ENCODE measurements at regions of chr11 and their contacts with region 1.

Region 1: GRCh38 chr11:120682866-120683265 is 171.3 kb downstream of the GRIK4 start:
- DNase-seq: no peak
- H3K4me3 ChIP-seq: no peak overlapping the region
- CTCF ChIP-seq: no peak

Region 2: DNA sequence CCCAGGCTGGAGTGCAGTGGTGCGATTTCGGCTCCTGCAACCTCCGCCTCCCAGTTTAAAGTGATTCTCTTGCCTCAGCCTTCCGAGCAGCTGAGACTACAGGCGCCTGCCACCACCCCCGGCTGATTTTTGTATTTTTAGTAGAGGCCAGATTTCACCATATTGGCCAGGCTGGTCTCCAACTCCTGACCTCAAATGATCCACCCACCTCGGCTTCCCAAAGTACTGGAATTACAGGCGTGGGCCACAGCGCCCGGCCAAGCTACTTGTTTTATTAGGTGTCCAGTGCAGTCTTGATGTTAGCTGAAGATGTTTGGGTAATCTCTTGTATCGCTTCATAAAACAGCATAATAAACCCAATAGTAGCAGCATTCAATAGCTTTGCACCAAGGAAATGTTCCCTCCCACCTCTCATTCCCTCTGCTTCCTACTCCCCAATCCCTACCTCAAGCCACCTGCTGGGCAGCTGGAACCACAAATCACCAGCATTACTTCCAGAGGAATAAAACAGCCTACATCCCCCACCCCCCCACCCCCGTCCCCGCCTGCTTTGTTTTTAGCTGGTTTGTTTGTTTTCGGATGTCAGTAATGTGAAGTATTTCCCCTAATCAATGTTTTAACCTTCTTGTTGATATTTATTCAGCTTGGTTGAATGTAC is 182.3 kb before region 1 on chr11:
- CTCF ChIA-PET with region 1: interaction called, 249 read pairs
- POLR2A ChIA-PET with region 1: no interaction called
- DNase-seq: no peak
- H3K4me3 ChIP-seq: no peak overlapping the region
- CTCF ChIP-seq: no peak

Region 3: GRCh38 chr11:120696597-120697218 is 13.8 kb after region 1 on chr11:
- CTCF ChIA-PET with region 1: interaction called, 29 read pairs
- POLR2A ChIA-PET with region 1: no interaction called
- DNase-seq: no peak
- H3K4me3 ChIP-seq: no peak overlapping the region
- CTCF ChIP-seq: no peak

Region 4: DNA sequence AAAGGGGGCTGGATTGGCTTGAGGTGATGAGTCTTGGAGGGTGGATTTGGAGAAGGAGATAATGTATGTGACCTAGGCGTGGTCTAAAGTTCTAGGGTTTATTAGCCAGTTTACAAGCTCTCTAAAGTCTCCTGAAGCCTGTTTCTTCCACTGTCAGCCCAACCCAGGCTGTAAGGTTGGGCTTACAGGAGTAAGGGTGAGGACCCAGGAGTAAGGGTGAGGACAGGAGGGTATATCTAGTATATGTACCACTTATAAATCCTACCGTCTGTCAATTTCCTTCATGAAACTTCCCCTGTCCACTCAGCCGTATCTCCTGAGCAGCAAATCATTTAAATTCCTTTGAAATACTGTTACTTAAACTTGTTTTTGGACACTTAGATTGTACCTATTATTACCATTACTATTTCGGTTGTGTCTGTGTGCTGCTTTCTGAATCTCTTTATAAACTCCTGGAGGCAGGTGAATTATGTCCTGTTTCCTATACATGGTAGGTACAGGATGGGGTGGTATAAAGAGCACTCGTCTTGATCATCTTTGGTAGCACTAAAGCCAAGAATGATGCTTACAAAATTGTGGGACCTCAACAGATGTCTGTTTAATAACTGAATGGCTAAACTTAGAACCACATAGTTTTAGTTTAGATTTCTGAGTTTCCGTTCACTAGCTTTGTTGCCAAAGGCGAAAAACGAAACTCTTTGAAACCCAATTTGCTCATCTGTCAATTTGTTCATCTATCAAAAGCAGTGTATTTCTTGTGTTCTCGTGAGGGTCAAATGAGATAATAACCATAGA is 20.7 kb after region 1 on chr11:
- CTCF ChIA-PET with region 1: interaction called, 29 read pairs
- POLR2A ChIA-PET with region 1: no interaction called
- DNase-seq: no peak
- H3K4me3 ChIP-seq: no peak overlapping the region
- CTCF ChIP-seq: no peak

Region 5: DNA sequence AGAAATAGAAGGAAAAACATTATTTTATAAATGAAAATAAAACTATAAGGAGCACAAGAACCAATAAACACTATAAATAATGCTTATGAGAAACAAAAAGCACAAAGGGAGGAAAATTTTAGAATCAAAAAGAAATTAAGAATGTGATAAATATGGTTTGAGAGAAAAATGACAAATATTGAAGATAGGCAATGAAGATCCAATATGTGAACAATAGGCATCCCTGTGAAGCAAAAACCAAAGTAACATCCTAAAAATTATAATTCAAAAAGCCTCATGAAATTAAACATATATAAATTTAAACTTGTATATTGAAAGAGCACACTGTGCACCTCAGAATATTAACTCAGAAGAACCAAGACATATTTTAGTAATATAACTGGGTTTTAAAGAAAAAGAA is 44.9 kb after region 1 on chr11:
- CTCF ChIA-PET with region 1: no interaction called
- POLR2A ChIA-PET with region 1: no interaction called
- DNase-seq: no peak
- H3K4me3 ChIP-seq: no peak overlapping the region
- CTCF ChIP-seq: no peak